ENCODE measurements at regions of chr9 and their contacts with region 1.

Region 1: GRCh38 chr9:101311758-101312420 is 72.9 kb downstream of the BAAT start:
- DNase-seq: no peak
- H3K4me3 ChIP-seq: no peak overlapping the region
- H3K27ac ChIP-seq: no peak overlapping the region
- H3K4me1 ChIP-seq: peaks cover 0 to 15% (median 7%) of the 10 kb centered on the region in 3 donors
- H3K27me3 ChIP-seq: peaks cover 0 to 7% (median 0%) of the 10 kb centered on the region in 4 donors
- CTCF ChIP-seq: peak; percentile 44 to 83 (median 68)
- POLR2A ChIP-seq: no peak

Region 2: GRCh38 chr9:100714372-100715099 is 597.4 kb before region 1 on chr9:
- intact Hi-C with region 1: loop called (anchors 5 kb)
- DNase-seq: no peak
- H3K4me3 ChIP-seq: no peak overlapping the region
- H3K27ac ChIP-seq: no peak overlapping the region
- H3K4me1 ChIP-seq: no peaks in the 10 kb centered on the region
- H3K27me3 ChIP-seq: peaks cover 0 to 6% (median 0%) of the 10 kb centered on the region in 4 donors
- CTCF ChIP-seq: peak; percentile 13 to 78 (median 72)
- POLR2A ChIP-seq: no peak

Region 3: DNA sequence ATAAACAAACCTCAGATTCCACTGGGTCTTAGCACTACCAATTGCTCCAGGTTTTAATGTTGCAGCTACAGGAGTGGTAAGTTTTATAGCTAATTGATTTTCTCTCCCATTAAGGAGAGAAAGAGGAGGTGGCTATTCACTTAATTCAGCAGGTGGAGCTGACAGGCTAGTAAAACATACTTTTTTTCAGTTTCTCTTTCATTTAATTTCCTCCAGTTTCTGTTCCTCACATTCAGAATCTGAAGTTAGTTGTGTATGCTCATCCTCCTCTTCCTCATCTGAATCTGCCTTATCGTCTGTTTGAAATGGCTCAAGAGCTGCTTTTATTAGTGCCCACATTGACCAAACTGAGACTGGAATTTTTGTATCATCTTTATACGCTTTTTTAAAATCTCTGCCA is 185.3 kb before region 1 on chr9:
- intact Hi-C with region 1: loop called (anchors 10 kb)
- DNase-seq: no peak
- H3K4me3 ChIP-seq: no peak overlapping the region
- H3K27ac ChIP-seq: no peak overlapping the region
- H3K4me1 ChIP-seq: no peaks in the 10 kb centered on the region
- H3K27me3 ChIP-seq: no peaks in the 10 kb centered on the region
- CTCF ChIP-seq: no peak
- POLR2A ChIP-seq: no peak